Heart left ventricle (tissue), 16 donors: ENCODE measurements at regions of chr11 and their contacts with region 1.

Region 1: GRCh38 chr11:78645226-78646202 is 70.8 kb upstream of the NARS2 start:
- DNase-seq: peak; percentile 37 to 76 (median 54)
- ATAC-seq: peak; percentile 64 to 85 (median 81)
- H3K4me3 ChIP-seq: peak overlapping the region in 1 of 12 donors; percentile 2
- H3K27ac ChIP-seq: no peak overlapping the region
- H3K4me1 ChIP-seq: no peaks in the 10 kb centered on the region
- H3K27me3 ChIP-seq: peaks cover 0 to 16% (median 0%) of the 10 kb centered on the region in 9 donors
- CTCF ChIP-seq: peak; percentile 87 to 98 (median 92)
- POLR2A ChIP-seq: no peak

Region 2: GRCh38 chr11:78798660-78799059 is 153.1 kb after region 1 on chr11:
- intact Hi-C with region 1: loop called in 1 of 10 experiments (anchors 10 kb)
- DNase-seq: peak; percentile 73 to 81 (median 76)
- ATAC-seq: peak; percentile 79 to 92 (median 86)
- H3K4me3 ChIP-seq: no peak overlapping the region
- H3K27ac ChIP-seq: peak overlapping the region in 2 of 12 donors; percentile 7 to 74
- H3K4me1 ChIP-seq: peaks cover 0 to 49% (median 22%) of the 10 kb centered on the region in 12 donors
- H3K27me3 ChIP-seq: no peaks in the 10 kb centered on the region
- CTCF ChIP-seq: peak; percentile 75 to 93 (median 84)
- POLR2A ChIP-seq: no peak

Region 3: GRCh38 chr11:79076526-79077115 is 431.1 kb after region 1 on chr11:
- intact Hi-C with region 1: loop called (anchors 1 to 10 kb)
- DNase-seq: peak in 2 of 5 donors; percentile 39 to 52
- ATAC-seq: no peak
- H3K4me3 ChIP-seq: no peak overlapping the region
- H3K27ac ChIP-seq: no peak overlapping the region
- H3K4me1 ChIP-seq: no peaks in the 10 kb centered on the region
- H3K27me3 ChIP-seq: no peaks in the 10 kb centered on the region
- CTCF ChIP-seq: peak; percentile 38 to 73 (median 60)
- POLR2A ChIP-seq: no peak

Region 4: DNA sequence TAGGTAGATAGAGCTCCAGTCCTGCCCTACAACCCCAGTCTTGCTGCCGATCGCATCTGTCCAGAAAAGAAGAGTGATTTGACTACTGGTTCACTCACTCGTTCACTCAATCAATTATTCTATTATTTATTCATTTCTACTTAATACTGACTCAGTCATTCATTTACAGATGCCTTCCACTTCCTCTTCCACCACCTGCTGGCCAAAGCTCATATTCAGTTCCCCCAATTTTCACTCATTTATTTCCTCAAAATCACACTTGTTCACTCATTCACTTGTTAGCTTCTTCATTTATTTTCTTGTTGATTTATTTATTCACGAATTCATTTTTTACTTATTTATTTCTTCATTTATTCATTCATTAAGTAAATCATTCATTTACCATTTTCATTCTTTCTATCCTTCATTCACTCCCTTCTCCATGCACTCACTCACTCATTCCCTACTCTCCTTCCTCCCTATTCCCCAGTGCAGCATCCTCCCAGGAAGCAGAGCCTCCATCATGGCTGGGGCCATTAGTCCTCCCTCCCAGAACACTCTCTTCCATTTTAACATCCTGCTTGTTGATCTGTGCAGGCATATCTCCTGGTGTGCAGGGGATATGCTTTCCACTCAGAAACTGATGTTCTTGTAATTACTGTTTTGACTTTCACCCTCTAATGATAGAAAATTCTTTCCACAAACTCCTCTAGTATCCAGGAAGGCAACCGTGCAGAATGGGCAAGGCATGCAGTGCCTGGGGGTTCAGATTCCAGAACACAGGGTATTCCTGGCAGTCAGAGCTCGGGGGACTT is 514.3 kb after region 1 on chr11:
- intact Hi-C with region 1: loop called in 1 of 10 experiments (anchors 5 kb)
- DNase-seq: no peak
- ATAC-seq: no peak
- H3K4me3 ChIP-seq: no peak overlapping the region
- H3K27ac ChIP-seq: no peak overlapping the region
- H3K4me1 ChIP-seq: no peaks in the 10 kb centered on the region
- H3K27me3 ChIP-seq: no peaks in the 10 kb centered on the region
- CTCF ChIP-seq: no peak
- POLR2A ChIP-seq: no peak